Colonic mucosa (tissue), 4 donors: ENCODE measurements at regions of chr20 and their contacts with region 1.

Region 1: DNA sequence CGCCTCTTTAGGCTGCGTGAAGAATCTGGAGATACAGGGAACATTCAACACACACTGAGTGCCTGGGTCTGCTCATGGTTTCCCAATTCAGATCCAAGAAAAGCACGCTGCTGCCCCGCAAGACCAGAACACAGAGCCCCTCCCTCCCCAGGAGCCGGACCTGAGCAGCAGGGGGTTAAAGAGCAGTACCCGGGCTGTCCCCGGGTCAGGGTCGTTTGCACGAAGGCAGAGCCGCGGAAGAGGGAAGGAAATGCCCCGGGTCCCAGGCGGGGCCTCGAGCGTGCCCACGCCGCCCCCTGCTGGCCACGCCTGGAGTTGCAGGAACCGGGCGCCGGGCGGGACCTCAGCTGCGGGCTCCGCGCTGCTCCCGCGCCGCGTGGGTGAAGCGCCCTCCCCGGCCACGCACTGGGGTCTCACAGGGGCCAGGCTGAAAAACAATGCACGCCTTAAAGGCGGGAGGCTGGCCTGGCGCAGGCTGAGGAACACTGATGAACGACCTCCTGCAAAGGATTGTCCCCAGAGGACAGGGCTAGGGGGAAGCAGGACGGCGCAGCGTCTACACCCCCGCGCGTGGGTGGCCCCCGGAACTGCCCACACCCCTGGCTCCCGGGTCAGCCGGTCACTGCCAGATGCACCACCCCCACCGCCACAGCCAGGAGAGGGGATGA is 48.9 kb downstream of the ANKRD60 start:
- DNase-seq: peak; percentile 62
- H3K4me3 ChIP-seq: peak overlapping the region; percentile 19
- H3K27ac ChIP-seq: no peak overlapping the region
- H3K4me1 ChIP-seq: no peaks in the 10 kb centered on the region
- H3K27me3 ChIP-seq: no peaks in the 10 kb centered on the region
- CTCF ChIP-seq: peak; percentile 99

Region 2: DNA sequence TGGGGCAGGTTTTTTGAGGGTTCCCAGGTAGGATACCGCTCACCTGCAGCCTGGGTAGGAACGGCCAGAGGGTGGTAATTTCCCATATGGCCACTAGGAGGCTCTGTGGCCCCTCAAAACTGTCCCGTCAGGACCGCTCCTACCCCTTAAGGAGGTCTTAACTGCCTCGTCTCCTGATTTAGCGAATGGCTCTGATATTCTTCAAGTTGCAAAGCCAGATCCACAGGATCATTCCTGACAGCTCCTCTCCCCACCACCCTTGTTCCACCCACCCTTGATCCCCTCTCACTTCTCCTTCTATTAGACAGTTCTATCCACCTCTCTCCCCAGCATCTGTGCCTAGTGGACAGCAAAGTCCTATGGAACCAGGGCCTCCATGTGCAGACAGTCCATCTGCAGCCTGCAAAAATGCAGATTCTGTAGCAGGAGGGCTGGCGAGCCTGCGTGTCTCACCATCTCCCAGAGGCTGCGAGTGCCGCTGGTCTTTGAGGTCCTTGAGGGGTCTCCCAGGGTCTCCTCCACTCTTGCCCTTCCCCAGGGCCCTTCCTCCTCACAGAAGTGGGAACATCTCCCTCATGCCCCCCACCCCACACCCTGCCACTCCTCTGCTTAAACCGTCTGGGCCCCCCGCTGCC is 525.1 kb before region 1 on chr20:
- intact Hi-C with region 1: loop called (anchors 5 kb)
- DNase-seq: peak; percentile 61
- H3K4me3 ChIP-seq: no peak overlapping the region
- H3K27ac ChIP-seq: no peak overlapping the region
- H3K4me1 ChIP-seq: no peaks in the 10 kb centered on the region
- H3K27me3 ChIP-seq: no peaks in the 10 kb centered on the region
- CTCF ChIP-seq: peak; percentile 89

Region 3: DNA sequence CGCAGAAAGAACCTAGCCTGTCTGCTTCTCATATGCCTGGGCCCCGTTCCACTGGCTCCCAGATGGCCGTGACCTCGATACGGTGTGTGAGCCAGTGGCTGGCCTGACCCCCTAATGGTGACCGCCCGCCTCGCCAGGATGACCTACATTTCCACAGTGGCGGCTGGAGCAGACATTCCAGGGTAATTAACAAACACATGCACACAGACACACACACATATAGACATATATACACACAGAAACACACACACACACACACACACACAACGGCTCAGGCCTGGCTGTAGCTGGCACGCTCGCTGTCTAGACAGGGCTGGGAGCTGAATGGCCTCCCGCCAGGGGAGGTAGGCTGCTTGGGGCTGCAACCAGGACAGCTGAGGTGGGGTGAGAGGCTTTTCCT is 178.2 kb before region 1 on chr20:
- intact Hi-C with region 1: no loop called
- DNase-seq: no peak
- H3K4me3 ChIP-seq: no peak overlapping the region
- H3K27ac ChIP-seq: no peak overlapping the region
- H3K4me1 ChIP-seq: peaks cover 7% of the 10 kb centered on the region
- H3K27me3 ChIP-seq: no peaks in the 10 kb centered on the region
- CTCF ChIP-seq: no peak

Region 4: DNA sequence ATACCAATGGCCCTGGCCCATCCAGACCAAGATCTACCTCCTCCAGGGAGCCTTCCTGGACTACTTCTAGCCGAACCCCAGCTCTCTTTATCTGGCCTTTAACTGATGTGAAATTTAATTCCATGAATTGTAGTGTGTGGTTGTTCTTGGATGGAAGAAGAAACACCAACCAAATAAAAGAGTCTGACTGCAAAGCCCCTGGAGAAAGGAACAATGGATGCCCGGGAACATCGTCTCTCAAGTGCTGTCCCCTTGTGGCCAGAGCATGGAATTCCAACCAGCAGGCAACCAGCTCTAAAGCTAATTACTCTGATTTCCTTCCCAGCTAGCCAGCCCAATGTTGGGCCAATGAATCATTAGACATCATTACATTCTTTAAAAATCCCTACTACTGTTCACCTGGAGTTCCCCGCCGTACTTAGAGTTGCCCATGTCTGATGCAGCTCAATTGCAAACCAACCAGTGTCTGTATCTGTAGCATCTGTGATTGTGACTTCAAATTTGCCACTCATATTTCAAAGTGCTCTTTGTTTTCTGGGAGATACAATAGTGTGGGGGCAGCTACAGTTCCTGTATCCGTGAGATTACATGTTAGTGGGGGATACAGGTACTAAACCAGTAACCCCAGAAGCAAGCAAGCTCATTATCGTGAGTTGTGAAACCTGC is 92.2 kb before region 1 on chr20:
- intact Hi-C with region 1: loop called (anchors 5 kb)
- DNase-seq: peak; percentile 52
- H3K4me3 ChIP-seq: no peak overlapping the region
- H3K27ac ChIP-seq: no peak overlapping the region
- H3K4me1 ChIP-seq: no peaks in the 10 kb centered on the region
- H3K27me3 ChIP-seq: no peaks in the 10 kb centered on the region
- CTCF ChIP-seq: peak; percentile 83

Region 5: DNA sequence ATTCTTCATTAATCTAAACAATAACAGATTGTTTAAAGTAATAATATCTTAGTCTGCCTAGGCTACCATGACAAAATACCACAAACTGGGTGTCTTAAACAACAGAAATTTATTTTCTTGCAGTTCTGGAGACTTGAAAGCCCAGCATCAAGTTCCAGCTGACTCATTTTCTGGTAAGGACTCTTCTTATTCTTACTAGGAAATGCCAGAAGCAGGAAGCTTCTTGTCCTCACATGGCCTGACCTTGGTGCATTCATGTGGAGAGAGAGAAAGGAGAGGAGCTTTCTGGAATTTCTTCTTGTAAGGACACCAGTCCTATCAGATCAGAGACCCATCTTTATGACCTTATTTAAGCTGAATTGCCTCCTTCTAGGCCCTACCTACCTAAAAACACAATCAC is 61.6 kb before region 1 on chr20:
- intact Hi-C with region 1: no loop called
- DNase-seq: no peak
- H3K4me3 ChIP-seq: no peak overlapping the region
- H3K27ac ChIP-seq: no peak overlapping the region
- H3K4me1 ChIP-seq: no peaks in the 10 kb centered on the region
- H3K27me3 ChIP-seq: no peaks in the 10 kb centered on the region
- CTCF ChIP-seq: no peak